Gastrocnemius medialis (tissue), 4 donors: ENCODE measurements at regions of chr5 and their contacts with region 1.

Region 1: GRCh38 chr5:39955156-39955555 is 530.4 kb upstream of the DAB2 start:
- DNase-seq: no peak
- ATAC-seq: no peak
- H3K4me3 ChIP-seq: no peak overlapping the region
- H3K27ac ChIP-seq: no peak overlapping the region
- H3K4me1 ChIP-seq: no peaks in the 10 kb centered on the region
- H3K27me3 ChIP-seq: no peaks in the 10 kb centered on the region
- CTCF ChIP-seq: no peak
- POLR2A ChIP-seq: no peak

Region 2: DNA sequence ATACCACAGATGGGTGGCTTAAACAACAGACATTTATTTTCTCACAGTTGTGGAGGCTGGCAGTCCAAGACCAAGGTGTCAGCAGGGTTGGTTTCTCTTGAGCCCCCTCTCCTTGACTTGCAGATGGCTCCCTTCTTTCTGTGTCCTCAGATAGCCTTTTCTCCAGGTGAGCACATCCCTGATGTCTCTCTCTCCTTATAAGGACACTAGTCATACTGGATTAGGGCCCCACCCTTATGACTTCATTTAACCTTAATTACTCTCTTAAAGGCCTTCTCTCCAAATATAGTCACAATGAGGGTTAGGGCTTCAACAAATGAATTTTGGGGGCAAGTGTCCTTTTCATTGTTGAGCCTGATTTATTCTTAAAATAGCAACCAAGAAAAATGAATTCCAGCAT is 739.3 kb after region 1 on chr5:
- in situ Hi-C with region 1: loop called in 1 of 4 experiments (anchors 10 kb)
- intact Hi-C with region 1: no loop called
- DNase-seq: no peak
- ATAC-seq: no peak
- H3K4me3 ChIP-seq: no peak overlapping the region
- H3K27ac ChIP-seq: no peak overlapping the region
- H3K4me1 ChIP-seq: peaks cover 4 to 9% of the 10 kb centered on the region in 2 donors
- H3K27me3 ChIP-seq: no peaks in the 10 kb centered on the region
- CTCF ChIP-seq: no peak
- POLR2A ChIP-seq: no peak